Activated naive CD4-positive, alpha-beta T cell treated with anti-CD3 and anti-CD28 coated beads, Interleukin-2, amount 10 ng/mL, durations not matched to agents 7 days and 5 days (primary cell): ENCODE measurements at regions of chr3 and their contacts with region 1.

Region 1: DNA sequence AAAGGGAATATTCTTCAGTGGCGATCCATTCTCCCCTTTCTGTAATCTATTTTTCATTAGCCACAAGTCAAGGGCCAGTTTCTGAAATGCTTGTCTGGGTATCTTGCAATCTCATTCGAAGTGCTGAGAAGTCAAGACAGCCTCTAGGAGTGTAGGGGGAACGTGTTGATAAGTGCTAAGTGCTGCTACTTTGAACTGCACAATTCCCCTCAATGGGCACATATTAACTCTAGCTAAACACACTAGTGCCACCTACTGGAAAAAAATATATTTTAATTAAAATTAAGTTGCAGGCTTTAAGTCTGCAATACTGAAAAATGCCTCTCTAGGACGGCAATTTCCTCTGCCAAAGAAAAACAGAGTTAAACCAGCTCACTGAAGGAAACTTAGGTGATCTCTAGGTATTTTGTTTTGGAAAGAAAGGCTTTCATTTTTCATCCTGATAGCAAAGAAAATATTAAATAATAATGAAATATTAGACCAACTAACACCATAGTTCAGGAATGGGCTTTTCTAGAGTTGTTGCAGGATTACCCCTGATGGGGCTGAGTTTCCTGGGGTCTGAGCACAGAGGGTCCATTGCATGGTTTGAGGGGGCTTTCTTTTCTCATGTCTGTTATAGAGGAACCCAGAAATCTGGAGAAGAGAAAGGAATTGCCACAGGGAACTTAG is 181.9 kb upstream of the KBTBD8 start:
- DNase-seq: no peak
- H3K4me3 Mint-ChIP-seq: no peak overlapping the region
- H3K27ac Mint-ChIP-seq: no peak overlapping the region
- H3K4me1 Mint-ChIP-seq: no peaks in the 10 kb centered on the region
- H3K27me3 Mint-ChIP-seq: peaks cover 15% of the 10 kb centered on the region

Region 2: GRCh38 chr3:66253790-66254620 is 562.2 kb before region 1 on chr3:
- CTCF ChIA-PET with region 1: interaction called, 63 read pairs
- DNase-seq: no peak
- H3K4me3 Mint-ChIP-seq: no peak overlapping the region
- H3K27ac Mint-ChIP-seq: no peak overlapping the region
- H3K4me1 Mint-ChIP-seq: no peaks in the 10 kb centered on the region
- H3K27me3 Mint-ChIP-seq: no peaks in the 10 kb centered on the region

Region 3: DNA sequence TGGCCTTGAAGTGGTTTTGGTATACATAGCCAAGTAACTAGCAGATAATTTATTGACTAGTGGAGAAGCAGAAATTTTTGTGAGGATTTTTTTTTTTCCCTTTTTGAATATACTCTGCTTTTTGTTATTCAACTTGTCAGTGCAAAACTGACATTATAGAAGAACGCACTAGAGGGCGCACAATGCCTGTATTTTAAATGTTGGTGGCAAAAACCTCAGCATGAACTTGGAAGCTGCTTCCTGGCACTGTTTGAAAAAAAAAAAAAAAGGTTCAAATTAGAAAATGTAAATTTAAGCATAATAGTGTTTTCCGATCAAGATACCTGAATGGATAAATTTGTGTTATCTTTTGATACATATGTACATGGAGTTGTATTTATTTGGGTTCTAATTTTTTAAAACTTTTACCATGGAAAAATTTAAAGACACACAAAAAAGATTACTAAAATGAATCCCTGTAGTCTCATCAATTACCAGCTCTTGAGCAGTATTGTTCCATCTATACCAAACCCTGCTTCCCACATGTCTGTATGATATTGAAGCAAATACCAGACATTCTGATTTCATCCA is 539.4 kb before region 1 on chr3:
- CTCF ChIA-PET with region 1: interaction called, 50 read pairs
- DNase-seq: peak; percentile 75
- H3K4me3 Mint-ChIP-seq: no peak overlapping the region
- H3K27ac Mint-ChIP-seq: no peak overlapping the region
- H3K4me1 Mint-ChIP-seq: peaks cover 25% of the 10 kb centered on the region
- H3K27me3 Mint-ChIP-seq: no peaks in the 10 kb centered on the region

Region 4: GRCh38 chr3:66407611-66408218 is 408.5 kb before region 1 on chr3:
- CTCF ChIA-PET with region 1: interaction called, 46 read pairs
- DNase-seq: peak; percentile 83
- H3K4me3 Mint-ChIP-seq: no peak overlapping the region
- H3K27ac Mint-ChIP-seq: no peak overlapping the region
- H3K4me1 Mint-ChIP-seq: no peaks in the 10 kb centered on the region
- H3K27me3 Mint-ChIP-seq: no peaks in the 10 kb centered on the region

Region 5: DNA sequence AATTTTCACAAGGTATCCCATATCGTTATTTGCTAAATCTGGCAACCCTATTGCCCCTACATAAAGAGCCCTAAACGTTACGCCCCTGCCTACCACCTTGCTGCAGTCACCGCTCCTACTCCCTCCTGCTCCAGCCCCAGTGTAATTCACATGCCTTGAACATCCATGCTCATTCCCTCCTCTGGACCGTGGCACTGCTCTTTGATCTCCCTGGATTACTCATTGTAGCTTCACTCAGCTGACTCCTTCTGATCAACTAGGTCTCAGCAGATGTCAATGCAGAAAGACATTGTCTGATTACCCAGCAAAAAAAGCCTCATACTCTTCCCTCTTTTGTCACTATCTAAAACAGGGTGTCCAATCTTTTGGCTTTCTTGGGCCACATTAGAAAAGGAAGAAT is 141.1 kb after region 1 on chr3:
- CTCF ChIA-PET with region 1: no interaction called
- DNase-seq: no peak
- H3K4me3 Mint-ChIP-seq: no peak overlapping the region
- H3K27ac Mint-ChIP-seq: no peak overlapping the region
- H3K4me1 Mint-ChIP-seq: no peaks in the 10 kb centered on the region
- H3K27me3 Mint-ChIP-seq: no peaks in the 10 kb centered on the region